ENCODE measurements at regions of chr11 and their contacts with region 1.

Region 1: DNA sequence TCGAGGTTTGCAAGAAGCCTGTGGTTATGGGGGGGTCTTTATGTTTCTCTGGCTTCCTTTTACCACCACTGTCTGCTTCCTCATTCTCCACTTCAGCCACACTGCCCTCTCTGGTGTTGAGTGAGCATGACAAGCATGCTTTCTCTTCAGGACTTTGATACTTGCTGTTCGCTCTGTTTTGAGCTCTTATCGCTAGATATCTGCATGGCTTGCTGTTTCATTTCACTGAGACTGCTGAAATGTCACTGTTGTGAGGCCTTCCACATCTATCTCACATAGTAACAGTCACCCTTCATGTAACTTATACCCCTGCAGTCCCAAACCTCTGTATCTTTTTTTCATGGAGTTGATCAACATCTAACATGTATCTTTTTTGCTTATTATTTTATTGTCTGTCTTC is 59.8 kb downstream of the TMEM135 start:
- DNase-seq: peak in 7 of 9 experiments; percentile 2 to 64 (median 41)
- ATAC-seq: peak; percentile 98
- H3K4me3 ChIP-seq: no peak overlapping the region
- H3K4me3 Mint-ChIP-seq: peak overlapping the region; percentile 44
- H3K27ac ChIP-seq: no peak overlapping the region
- H3K27ac Mint-ChIP-seq: no peak overlapping the region
- H3K4me1 ChIP-seq: peaks cover 3% of the 10 kb centered on the region
- H3K4me1 Mint-ChIP-seq: peaks cover 12% of the 10 kb centered on the region
- H3K27me3 ChIP-seq: no peaks in the 10 kb centered on the region
- H3K27me3 Mint-ChIP-seq: no peaks in the 10 kb centered on the region
- CTCF ChIP-seq: peak; percentile 62

Region 2: GRCh38 chr11:86923999-86924766 is 173.4 kb before region 1 on chr11:
- CTCF ChIA-PET with region 1: no interaction called
- POLR2A ChIA-PET with region 1: no interaction called
- intact Hi-C with region 1: no loop called
- DNase-seq: no peak
- ATAC-seq: no peak
- H3K4me3 ChIP-seq: no peak overlapping the region
- H3K4me3 Mint-ChIP-seq: no peak overlapping the region
- H3K27ac ChIP-seq: no peak overlapping the region
- H3K27ac Mint-ChIP-seq: no peak overlapping the region
- H3K4me1 ChIP-seq: no peaks in the 10 kb centered on the region
- H3K4me1 Mint-ChIP-seq: no peaks in the 10 kb centered on the region
- H3K27me3 ChIP-seq: no peaks in the 10 kb centered on the region
- H3K27me3 Mint-ChIP-seq: peaks cover 2% of the 10 kb centered on the region
- CTCF ChIP-seq: no peak

Region 3: DNA sequence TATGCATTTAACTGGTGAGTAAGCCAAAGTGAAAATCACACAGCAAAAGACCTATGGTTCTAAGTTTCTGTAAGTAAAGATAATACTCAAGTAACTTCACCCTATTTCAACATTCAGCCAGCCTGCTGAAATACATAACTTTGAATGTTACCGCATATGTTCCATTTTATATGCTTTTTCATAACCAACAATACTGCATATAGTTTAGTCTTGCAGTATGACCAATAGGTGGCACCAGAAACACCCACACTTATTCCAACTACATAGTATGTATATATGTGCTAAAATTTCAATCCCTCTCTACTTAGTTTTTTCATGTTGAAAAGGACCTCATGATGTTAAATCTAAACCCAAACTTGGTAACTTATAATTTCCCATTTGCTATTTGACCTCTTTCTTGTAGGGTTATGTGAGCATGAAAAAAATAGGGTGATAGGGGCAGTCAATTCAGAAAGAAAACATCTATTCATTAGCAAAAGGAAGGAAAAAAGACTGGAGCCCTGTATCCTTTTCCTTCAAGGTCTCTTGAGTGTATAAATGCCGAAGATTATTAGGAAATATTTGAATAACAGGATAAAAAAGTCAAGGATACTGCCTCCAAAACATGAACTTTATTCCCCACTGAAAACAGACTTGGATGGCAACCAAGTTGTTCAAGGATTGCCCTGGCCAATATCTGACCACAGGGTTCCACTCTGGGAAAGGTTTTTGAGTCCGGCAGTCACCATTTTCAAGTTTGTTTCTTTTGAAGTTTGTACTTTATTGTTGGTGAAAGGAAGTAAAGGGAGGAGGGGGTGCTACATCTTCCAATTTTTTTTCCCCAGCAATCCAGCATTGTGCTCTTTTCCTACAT is 118.6 kb before region 1 on chr11:
- CTCF ChIA-PET with region 1: no interaction called
- POLR2A ChIA-PET with region 1: no interaction called
- intact Hi-C with region 1: loop called in 1 of 2 experiments (anchors 1 kb)
- DNase-seq: peak in 2 of 9 experiments; percentile 47 to 60
- ATAC-seq: no peak
- H3K4me3 ChIP-seq: no peak overlapping the region
- H3K4me3 Mint-ChIP-seq: no peak overlapping the region
- H3K27ac ChIP-seq: no peak overlapping the region
- H3K27ac Mint-ChIP-seq: no peak overlapping the region
- H3K4me1 ChIP-seq: no peaks in the 10 kb centered on the region
- H3K4me1 Mint-ChIP-seq: no peaks in the 10 kb centered on the region
- H3K27me3 ChIP-seq: no peaks in the 10 kb centered on the region
- H3K27me3 Mint-ChIP-seq: no peaks in the 10 kb centered on the region
- CTCF ChIP-seq: peak; percentile 71

Region 4: GRCh38 chr11:86999859-87000753 is 97.5 kb before region 1 on chr11:
- CTCF ChIA-PET with region 1: no interaction called
- POLR2A ChIA-PET with region 1: no interaction called
- intact Hi-C with region 1: loop called (anchors 5 kb)
- DNase-seq: no peak
- ATAC-seq: no peak
- H3K4me3 ChIP-seq: no peak overlapping the region
- H3K4me3 Mint-ChIP-seq: no peak overlapping the region
- H3K27ac ChIP-seq: no peak overlapping the region
- H3K27ac Mint-ChIP-seq: no peak overlapping the region
- H3K4me1 ChIP-seq: no peaks in the 10 kb centered on the region
- H3K4me1 Mint-ChIP-seq: no peaks in the 10 kb centered on the region
- H3K27me3 ChIP-seq: no peaks in the 10 kb centered on the region
- H3K27me3 Mint-ChIP-seq: peaks cover 3% of the 10 kb centered on the region
- CTCF ChIP-seq: no peak

Region 5: DNA sequence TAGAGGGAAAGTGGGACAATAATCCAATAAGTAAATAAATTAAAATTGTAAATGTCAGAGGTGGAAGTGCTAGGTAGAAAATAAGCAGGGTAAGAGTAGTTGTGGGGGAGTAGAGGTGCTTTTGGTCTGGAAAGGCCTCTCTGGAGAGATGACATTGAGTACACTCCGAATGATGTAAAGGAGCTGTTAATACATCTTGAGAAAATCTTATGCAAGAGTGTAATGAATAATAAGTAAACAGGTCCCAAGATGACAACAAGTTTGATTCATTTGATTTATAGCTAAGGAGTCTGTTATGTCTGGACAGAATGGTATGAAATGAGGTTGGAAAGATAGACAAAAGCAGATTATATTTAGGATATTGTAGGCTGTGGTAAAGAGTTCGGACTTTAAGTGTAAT is 27.7 kb after region 1 on chr11:
- CTCF ChIA-PET with region 1: no interaction called
- POLR2A ChIA-PET with region 1: no interaction called
- intact Hi-C with region 1: no loop called
- DNase-seq: no peak
- ATAC-seq: no peak
- H3K4me3 ChIP-seq: no peak overlapping the region
- H3K4me3 Mint-ChIP-seq: no peak overlapping the region
- H3K27ac ChIP-seq: no peak overlapping the region
- H3K27ac Mint-ChIP-seq: no peak overlapping the region
- H3K4me1 ChIP-seq: no peaks in the 10 kb centered on the region
- H3K4me1 Mint-ChIP-seq: peaks cover 5% of the 10 kb centered on the region
- H3K27me3 ChIP-seq: no peaks in the 10 kb centered on the region
- H3K27me3 Mint-ChIP-seq: no peaks in the 10 kb centered on the region
- CTCF ChIP-seq: no peak